Activated CD8-positive, alpha-beta T cell treated with anti-CD3 and anti-CD28 coated beads, Interleukin-2, amount 10 ng/mL, durations not matched to agents 7 days and 5 days (primary cell): ENCODE measurements at regions of chr15 and their contacts with region 1.

Region 1: DNA sequence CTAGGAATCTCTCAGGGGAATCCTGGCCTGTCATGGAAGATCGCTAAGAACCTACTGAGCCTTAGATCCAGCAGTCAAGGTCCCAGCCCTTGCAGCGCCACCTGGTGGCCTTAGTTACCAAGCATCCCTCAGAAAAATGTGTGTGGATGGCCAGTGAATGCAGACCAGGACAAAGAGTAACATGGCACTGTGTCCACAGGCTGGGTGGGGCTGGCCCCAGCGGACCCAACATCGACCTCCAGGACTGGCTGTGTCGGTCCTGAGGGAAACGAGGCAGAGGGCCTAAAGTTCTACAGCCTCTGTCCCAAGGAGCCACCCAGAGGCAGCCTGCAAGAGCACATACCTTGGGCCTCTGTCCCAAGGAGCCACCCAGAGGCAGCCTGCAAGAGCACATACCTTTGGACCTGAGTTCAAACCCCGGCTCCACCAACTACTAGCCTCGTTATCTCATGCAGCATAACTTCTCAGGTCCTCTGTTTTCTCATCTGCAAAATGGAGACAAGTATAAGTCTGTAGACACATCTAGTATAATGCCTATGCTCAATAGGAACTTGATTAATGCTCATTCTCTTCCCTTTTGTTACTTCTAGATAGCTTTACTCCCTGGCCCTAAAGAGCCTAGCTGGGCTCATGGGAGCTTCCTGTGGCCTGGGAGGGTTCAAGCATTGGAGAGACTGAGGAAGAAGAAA is 57.5 kb upstream of the HERC1 start:
- DNase-seq: peak; percentile 80
- ATAC-seq: peak; percentile 28
- H3K4me3 Mint-ChIP-seq: peak overlapping the region; percentile 25
- H3K27ac Mint-ChIP-seq: peak overlapping the region; percentile 86
- H3K4me1 Mint-ChIP-seq: peaks cover 65% of the 10 kb centered on the region
- H3K27me3 Mint-ChIP-seq: no peaks in the 10 kb centered on the region

Region 2: GRCh38 chr15:63763476-63764123 is 127.6 kb before region 1 on chr15:
- CTCF ChIA-PET with region 1: interaction called, 10 read pairs
- POLR2A ChIA-PET with region 1: no interaction called
- DNase-seq: peak; percentile 35
- ATAC-seq: peak; percentile 95
- H3K4me3 Mint-ChIP-seq: peak overlapping the region; percentile 61
- H3K27ac Mint-ChIP-seq: peak overlapping the region; percentile 79
- H3K4me1 Mint-ChIP-seq: peaks cover 41% of the 10 kb centered on the region
- H3K27me3 Mint-ChIP-seq: no peaks in the 10 kb centered on the region

Region 3: GRCh38 chr15:63833021-63833696 is 58.1 kb before region 1 on chr15:
- CTCF ChIA-PET with region 1: interaction called, 15 read pairs
- POLR2A ChIA-PET with region 1: interaction called, 3 read pairs
- DNase-seq: peak; percentile 49
- ATAC-seq: peak; percentile 69
- H3K4me3 Mint-ChIP-seq: peak overlapping the region; percentile 88
- H3K27ac Mint-ChIP-seq: peak overlapping the region; percentile 84
- H3K4me1 Mint-ChIP-seq: peaks cover 43% of the 10 kb centered on the region
- H3K27me3 Mint-ChIP-seq: peaks cover 8% of the 10 kb centered on the region

Region 4: GRCh38 chr15:63870403-63871209 is 20.6 kb before region 1 on chr15:
- CTCF ChIA-PET with region 1: interaction called, 17 read pairs
- POLR2A ChIA-PET with region 1: interaction called, 4 read pairs
- DNase-seq: no peak
- ATAC-seq: peak; percentile 19
- H3K4me3 Mint-ChIP-seq: no peak overlapping the region
- H3K27ac Mint-ChIP-seq: no peak overlapping the region
- H3K4me1 Mint-ChIP-seq: peaks cover 6% of the 10 kb centered on the region
- H3K27me3 Mint-ChIP-seq: no peaks in the 10 kb centered on the region

Region 5: GRCh38 chr15:64010719-64011118 is 119.5 kb after region 1 on chr15:
- CTCF ChIA-PET with region 1: interaction called, 13 read pairs
- POLR2A ChIA-PET with region 1: interaction called, 6 read pairs
- DNase-seq: peak; percentile 92
- ATAC-seq: peak; percentile 100
- H3K4me3 Mint-ChIP-seq: peak overlapping the region; percentile 7
- H3K27ac Mint-ChIP-seq: peak overlapping the region; percentile 75
- H3K4me1 Mint-ChIP-seq: peaks cover 37% of the 10 kb centered on the region
- H3K27me3 Mint-ChIP-seq: peaks cover 5% of the 10 kb centered on the region

Region 6: GRCh38 chr15:64067564-64068030 is 176.4 kb after region 1 on chr15:
- CTCF ChIA-PET with region 1: interaction called, 15 read pairs
- POLR2A ChIA-PET with region 1: no interaction called
- DNase-seq: peak; percentile 79
- ATAC-seq: peak; percentile 89
- H3K4me3 Mint-ChIP-seq: no peak overlapping the region
- H3K27ac Mint-ChIP-seq: peak overlapping the region; percentile 71
- H3K4me1 Mint-ChIP-seq: peaks cover 26% of the 10 kb centered on the region
- H3K27me3 Mint-ChIP-seq: no peaks in the 10 kb centered on the region